ENCODE measurements at regions of chr11 and their contacts with region 1.

Region 1: DNA sequence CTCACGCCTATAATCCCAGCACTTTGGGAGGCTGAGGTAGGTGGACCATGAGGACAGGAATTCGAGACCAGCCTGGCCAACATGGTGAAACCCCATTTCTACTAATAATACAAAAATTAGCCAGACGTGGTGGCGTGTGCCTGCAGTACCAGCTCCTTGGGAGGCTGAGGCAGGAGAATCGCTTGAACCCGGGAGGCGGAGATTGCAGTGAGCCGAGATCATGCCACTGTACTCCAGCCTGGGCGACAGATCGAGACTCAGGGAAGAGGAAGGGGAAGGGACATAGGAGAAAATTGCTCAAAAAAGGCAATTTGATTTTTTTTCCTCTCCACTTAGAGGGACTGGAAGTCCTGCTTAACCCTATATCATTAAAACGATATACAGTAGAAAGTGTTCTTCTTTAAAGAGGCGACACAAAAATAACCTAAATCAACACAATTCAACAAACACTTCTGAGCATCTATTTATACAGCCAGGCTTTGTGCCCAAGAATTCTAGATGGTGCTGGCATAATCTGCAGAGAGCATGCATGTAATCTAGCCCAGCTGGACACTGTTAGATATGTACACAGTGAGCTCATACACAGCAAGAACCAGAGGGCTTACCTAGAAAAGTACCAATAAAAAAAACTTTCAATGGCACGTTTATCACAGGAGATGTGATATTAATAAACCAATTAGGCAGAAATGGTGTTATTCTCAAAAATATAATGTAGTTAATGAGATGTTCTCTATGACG is 20.9 kb upstream of the DENND5A start:
- DNase-seq: no peak
- ATAC-seq: peak; percentile 64; the same call in 1 of the 2 replicates
- H3K4me3 ChIP-seq: no peak overlapping the region
- H3K27ac ChIP-seq: no peak overlapping the region
- H3K4me1 ChIP-seq: peaks cover 4% of the 10 kb centered on the region; the same call in 1 of the 2 replicates
- H3K27me3 ChIP-seq: no peaks in the 10 kb centered on the region
- CTCF ChIP-seq: no peak

Region 2: DNA sequence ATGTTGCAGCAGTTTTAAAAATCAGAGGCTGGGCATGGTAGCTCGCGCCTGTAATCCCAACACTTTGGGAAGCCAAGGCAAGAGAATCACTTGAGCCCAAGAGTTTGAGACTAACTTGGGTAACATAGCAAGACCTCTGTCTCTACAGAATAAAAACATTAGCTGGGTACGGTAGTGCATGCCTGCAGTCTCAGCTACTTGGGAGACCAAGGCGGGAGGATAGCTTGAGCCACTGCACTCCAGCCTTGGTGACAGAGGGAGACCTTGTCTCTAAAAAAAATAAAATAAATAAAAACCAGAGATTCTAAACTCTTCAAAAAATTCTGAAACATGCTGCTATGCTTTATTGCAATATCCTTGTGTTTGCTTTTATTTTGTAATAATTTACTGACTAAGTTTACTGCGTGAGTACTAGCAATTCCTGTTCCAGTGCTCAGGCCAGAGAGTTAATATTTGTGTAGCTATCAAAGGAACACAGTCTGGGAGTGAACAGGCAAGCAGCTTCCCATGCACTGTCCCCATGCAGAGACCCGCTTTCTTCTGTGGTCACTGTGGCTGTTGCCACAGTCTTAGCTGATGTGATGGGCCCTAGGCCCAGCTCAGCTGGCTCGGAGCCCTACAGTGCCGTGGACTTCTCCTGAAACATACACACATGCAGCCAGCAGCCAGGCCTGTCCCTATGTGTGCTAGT is 182.7 kb before region 1 on chr11:
- CTCF ChIA-PET with region 1: no interaction called
- POLR2A ChIA-PET with region 1: interaction called, 13 read pairs
- in situ Hi-C with region 1: no loop called
- intact Hi-C with region 1: no loop called
- DNase-seq: no peak
- ATAC-seq: peak; percentile 52; the same call in 1 of the 2 replicates
- H3K4me3 ChIP-seq: no peak overlapping the region
- H3K27ac ChIP-seq: no peak overlapping the region
- H3K4me1 ChIP-seq: no peaks in the 10 kb centered on the region
- H3K27me3 ChIP-seq: no peaks in the 10 kb centered on the region
- CTCF ChIP-seq: no peak

Region 3: DNA sequence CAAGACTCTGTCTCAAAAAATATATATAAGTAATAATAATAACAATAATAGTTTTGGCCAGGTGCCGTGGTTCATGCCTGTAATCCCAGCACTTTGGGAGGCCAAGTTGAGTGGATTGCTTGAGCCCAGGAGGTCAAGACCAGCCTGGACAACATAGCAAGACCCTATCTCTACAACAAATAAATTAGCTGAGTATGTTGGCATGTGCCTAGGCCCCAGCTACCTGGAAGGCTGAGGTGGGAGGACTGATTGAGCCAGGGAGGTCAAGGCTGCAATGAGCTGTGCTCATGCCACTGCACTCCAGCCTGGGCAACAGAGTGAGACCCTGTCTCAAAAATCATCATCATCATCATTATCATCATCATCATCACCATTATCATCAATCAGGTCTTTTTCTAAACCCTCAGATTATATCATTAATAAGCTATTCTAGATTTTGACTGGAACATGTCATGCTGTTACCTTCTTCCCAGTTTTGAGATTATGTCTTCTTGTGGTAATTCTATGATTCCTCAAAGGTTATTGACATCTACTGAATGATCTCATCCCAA is 60.2 kb before region 1 on chr11:
- CTCF ChIA-PET with region 1: no interaction called
- POLR2A ChIA-PET with region 1: interaction called, 11 read pairs
- in situ Hi-C with region 1: no loop called
- intact Hi-C with region 1: no loop called
- DNase-seq: no peak
- ATAC-seq: no peak
- H3K4me3 ChIP-seq: no peak overlapping the region
- H3K27ac ChIP-seq: no peak overlapping the region
- H3K4me1 ChIP-seq: 0 out of 2 replicates have a peak, but pooled peaks cover 10% of the 10 kb centered on the region
- H3K27me3 ChIP-seq: no peaks in the 10 kb centered on the region
- CTCF ChIP-seq: no peak